ENCODE measurements at regions of chr3 and their contacts with region 1.

Region 1: GRCh38 chr3:15268033-15268631 is 62.1 kb downstream of the CAPN7 start:
- DNase-seq: peak; percentile 70
- ATAC-seq: peak; percentile 40
- H3K4me3 Mint-ChIP-seq: peak overlapping the region; percentile 46
- H3K27ac Mint-ChIP-seq: no peak overlapping the region
- H3K4me1 Mint-ChIP-seq: peaks cover 89% of the 10 kb centered on the region
- H3K27me3 Mint-ChIP-seq: no peaks in the 10 kb centered on the region
- CTCF ChIP-seq: peak; percentile 65

Region 2: DNA sequence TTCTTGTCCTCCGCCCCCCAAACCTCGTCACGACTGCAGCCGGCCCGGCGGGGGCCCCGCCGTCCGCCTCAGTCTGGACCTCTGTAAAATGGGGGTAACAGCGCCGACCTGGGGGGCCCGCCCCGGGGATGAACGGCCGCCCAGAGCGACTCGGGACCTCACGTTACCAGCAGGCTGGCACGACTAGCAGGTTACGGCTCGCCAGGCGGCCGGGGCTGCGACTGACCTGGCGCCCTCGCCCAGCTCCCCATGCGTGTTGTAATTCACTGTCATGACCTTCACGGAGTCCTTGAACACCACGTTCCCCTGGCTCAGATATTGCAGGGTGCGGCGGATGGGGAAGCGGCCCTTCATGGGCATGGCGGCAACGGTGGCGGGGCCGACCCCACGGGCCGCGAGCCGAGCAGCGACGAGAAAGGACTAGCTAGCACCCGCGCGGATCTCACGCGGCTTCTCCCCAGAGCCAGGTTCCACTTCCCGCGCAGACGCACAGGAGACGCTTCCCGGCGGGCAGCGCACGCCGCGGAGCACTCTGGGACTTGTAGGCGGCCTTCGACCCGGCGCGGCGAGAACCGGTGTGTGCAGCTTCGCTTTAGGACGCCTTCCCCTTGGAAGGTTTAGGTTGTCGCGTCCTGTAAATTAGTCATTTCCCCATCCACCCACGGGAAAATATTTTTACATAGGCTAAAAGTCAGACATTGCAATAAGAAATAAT is 203.1 kb before region 1 on chr3 and contains the start of gene MRPS25:
- CTCF ChIA-PET with region 1: no interaction called
- POLR2A ChIA-PET with region 1: no interaction called
- intact Hi-C with region 1: no loop called
- DNase-seq: peak; percentile 84
- ATAC-seq: peak; percentile 97
- H3K4me3 Mint-ChIP-seq: peak within 1 kb of the TSS; percentile 98
- H3K27ac Mint-ChIP-seq: peak within 1 kb of the TSS; percentile 95
- H3K4me1 Mint-ChIP-seq: peaks cover 25% of the 10 kb centered on the region
- H3K27me3 Mint-ChIP-seq: no peaks in the 10 kb centered on the region
- CTCF ChIP-seq: no peak
- total RNA-seq, gene MRPS25: 72.4 and 85.9 TPM in 2 replicates

Region 3: GRCh38 chr3:15228147-15228546 is 40.0 kb before region 1 on chr3:
- CTCF ChIA-PET with region 1: no interaction called
- POLR2A ChIA-PET with region 1: no interaction called
- intact Hi-C with region 1: no loop called
- DNase-seq: no peak
- ATAC-seq: no peak
- H3K4me3 Mint-ChIP-seq: no peak overlapping the region
- H3K27ac Mint-ChIP-seq: no peak overlapping the region
- H3K4me1 Mint-ChIP-seq: no peaks in the 10 kb centered on the region
- H3K27me3 Mint-ChIP-seq: no peaks in the 10 kb centered on the region
- CTCF ChIP-seq: no peak

Region 4: DNA sequence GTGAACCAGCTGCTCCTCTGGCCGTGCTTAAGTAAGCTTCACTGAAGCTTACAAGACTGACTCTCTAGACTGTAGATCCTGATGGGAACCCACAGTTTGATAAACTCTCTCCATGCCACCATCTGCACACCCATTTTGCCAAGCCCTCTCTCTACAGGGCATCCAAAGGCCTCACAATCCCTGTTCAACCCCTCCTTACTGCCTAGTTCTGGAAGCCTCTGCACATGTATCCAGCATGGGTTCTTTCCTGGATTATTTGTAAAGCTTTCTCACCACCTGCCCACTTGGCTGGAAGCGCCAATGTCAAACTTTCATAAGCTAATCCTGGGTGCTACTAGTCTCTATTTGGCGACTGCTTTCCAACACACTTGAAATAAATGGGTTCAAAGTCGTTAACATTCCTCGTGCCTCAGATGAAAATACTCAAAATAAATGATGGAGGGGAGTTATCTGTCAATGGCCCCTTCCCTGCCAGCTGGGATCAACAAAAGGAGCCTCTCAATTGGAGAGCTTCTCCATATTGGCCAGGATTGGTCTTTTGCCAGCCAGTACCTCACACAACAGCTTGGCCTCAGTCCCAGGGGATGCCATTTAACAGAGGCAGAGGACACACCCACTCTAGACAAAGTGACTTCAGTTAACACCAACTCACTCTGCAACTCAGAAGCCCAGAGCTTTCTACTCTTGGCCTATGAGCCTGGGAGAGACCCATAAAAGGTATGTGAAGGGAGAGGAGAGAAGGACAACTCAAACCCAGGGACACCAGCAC is 16.2 kb after region 1 on chr3:
- CTCF ChIA-PET with region 1: interaction called, 6 read pairs
- POLR2A ChIA-PET with region 1: interaction called, 7 read pairs
- intact Hi-C with region 1: loop called (anchors 1 kb)
- DNase-seq: no peak
- ATAC-seq: peak; percentile 63
- H3K4me3 Mint-ChIP-seq: peak overlapping the region; percentile 58
- H3K27ac Mint-ChIP-seq: peak overlapping the region; percentile 68
- H3K4me1 Mint-ChIP-seq: peaks cover 97% of the 10 kb centered on the region
- H3K27me3 Mint-ChIP-seq: no peaks in the 10 kb centered on the region
- CTCF ChIP-seq: no peak

Region 5: DNA sequence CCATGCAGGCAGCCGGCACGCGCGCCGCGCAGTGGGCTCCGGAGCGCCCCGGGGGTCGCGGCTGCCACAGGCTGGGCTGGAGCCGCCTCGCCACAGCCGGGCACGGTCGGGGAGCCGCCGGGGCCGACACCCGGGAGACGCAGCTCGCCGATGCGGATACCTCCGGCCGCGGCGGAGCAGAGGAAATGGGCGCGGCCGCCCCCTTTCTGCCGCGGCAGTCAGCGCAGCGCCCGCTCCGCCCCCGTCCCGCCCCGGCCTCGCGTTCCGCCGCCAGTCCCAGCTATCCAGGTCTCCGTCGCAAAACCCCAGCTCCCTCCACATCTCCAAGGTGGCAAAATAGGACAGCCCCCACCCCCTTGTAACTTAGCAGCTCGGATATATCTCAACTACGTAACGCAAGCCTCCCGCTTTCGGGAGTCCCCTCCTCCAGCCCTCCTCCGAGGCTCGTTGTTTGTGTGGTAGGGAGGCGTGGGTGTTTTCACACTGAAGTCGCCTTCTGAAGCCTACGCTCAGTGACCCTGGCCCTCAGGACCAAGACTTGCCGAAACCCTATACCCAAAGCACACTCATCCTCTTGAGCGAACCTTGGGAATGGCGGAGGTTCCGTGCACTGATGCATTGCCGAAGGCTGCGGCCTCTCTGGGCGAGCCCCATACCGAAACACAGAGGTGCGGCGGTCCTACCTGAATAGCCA is 64.4 kb after region 1 on chr3 and contains the start of gene SH3BP5:
- CTCF ChIA-PET with region 1: interaction called, 141 read pairs
- POLR2A ChIA-PET with region 1: interaction called, 118 read pairs
- intact Hi-C with region 1: loop called (anchors 1 kb)
- DNase-seq: peak; percentile 80
- ATAC-seq: peak; percentile 84
- H3K4me3 Mint-ChIP-seq: peak within 1 kb of the TSS; percentile 95
- H3K27ac Mint-ChIP-seq: peak within 1 kb of the TSS; percentile 96
- H3K4me1 Mint-ChIP-seq: peaks cover 62% of the 10 kb centered on the region
- H3K27me3 Mint-ChIP-seq: no peaks in the 10 kb centered on the region
- CTCF ChIP-seq: no peak
- total RNA-seq, gene SH3BP5: 60.5 and 66.0 TPM in 2 replicates

Region 6: DNA sequence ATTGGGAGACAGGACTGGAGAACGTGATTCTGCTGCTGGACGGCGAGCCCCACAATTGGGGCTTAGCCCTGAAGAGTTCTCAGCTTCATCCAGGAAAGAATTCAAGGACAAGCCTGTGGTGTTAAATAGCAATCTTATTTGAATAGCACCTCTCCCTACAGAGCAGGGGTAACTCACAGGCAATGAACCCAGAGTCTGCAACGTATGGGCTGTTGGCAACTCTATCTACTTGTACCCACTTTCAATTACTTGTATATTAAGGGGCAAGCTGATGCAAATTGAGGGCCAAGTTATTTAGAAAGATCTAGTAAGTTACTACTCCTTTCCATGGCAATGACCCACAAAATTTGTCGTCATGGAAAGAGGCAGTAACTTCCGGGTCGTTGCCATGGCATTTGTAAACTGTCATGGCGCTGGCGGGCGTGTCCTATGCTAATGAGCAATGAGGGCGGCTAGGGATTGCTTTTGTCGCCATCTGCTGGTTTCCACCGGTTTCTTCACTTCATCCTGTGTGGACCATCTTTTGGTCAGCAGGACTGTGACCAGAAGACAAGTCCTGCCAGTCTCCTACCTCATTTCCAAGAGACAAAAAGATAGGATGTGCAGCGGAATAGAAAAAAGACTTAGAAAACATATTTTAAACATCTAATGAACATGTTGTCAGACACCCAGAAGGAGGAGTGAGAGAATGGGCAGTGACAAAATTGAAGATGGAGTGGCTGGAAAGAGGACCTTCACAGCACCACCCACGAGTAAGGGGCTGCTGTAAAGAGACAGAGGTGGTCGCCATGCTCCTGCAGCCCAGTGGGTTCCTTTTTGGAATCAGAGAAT is 110.0 kb after region 1 on chr3:
- CTCF ChIA-PET with region 1: interaction called, 105 read pairs
- POLR2A ChIA-PET with region 1: interaction called, 21 read pairs
- intact Hi-C with region 1: loop called (anchors 1 kb)
- DNase-seq: peak; percentile 88
- ATAC-seq: peak; percentile 94
- H3K4me3 Mint-ChIP-seq: peak overlapping the region; percentile 44
- H3K27ac Mint-ChIP-seq: peak overlapping the region; percentile 91
- H3K4me1 Mint-ChIP-seq: peaks cover 29% of the 10 kb centered on the region
- H3K27me3 Mint-ChIP-seq: no peaks in the 10 kb centered on the region
- CTCF ChIP-seq: no peak

Region 7: GRCh38 chr3:15405448-15406050 is 137.4 kb after region 1 on chr3:
- CTCF ChIA-PET with region 1: interaction called, 156 read pairs
- POLR2A ChIA-PET with region 1: interaction called, 9 read pairs
- intact Hi-C with region 1: loop called (anchors 1 kb)
- DNase-seq: no peak
- ATAC-seq: peak; percentile 73
- H3K4me3 Mint-ChIP-seq: no peak overlapping the region
- H3K27ac Mint-ChIP-seq: no peak overlapping the region
- H3K4me1 Mint-ChIP-seq: peaks cover 24% of the 10 kb centered on the region
- H3K27me3 Mint-ChIP-seq: no peaks in the 10 kb centered on the region
- CTCF ChIP-seq: peak; percentile 27

Measured in activated B cell treated with CpG ODN at 0.5 μM for 24 hours (primary cell).